Ovary (tissue), 10 donors: ENCODE measurements at regions of chr3 and their contacts with region 1.

Region 1: DNA sequence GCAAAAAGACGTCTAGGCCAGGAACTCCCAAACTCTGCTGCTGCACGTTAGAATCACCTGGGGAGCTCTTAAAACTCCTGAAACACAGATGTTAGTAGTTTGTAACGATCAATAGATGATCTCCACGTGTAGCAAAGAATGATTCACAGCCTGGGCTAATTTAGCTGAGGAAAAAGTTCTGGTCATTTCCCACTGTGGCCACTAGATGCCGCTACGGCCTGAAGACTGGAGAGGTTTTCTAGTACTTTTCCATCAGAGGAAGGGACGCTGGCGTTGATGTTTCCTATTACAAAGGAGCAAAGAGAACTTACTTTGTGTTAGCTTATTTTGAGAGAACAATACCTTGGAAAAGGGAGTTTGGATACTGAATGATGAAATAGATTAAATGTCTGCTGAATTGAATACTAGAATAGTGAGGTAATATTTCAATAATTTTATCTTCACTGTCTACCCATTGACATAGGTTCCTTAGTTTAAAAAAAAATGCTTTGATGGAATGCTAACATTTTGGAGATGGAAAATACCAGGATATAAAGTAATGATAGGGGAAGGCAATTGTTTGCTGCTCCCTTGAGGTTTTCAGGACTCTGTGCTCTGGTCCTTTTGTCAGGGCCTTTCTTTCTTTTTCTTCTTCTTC is 159.1 kb downstream of the P3H2 start:
- DNase-seq: peak; percentile 59 to 83 (median 78)
- H3K4me3 ChIP-seq: no peak overlapping the region
- H3K27ac ChIP-seq: no peak overlapping the region
- H3K4me1 ChIP-seq: no peaks in the 10 kb centered on the region
- H3K27me3 ChIP-seq: no peaks in the 10 kb centered on the region
- CTCF ChIP-seq: peak; percentile 80 to 84 (median 84)
- EP300 ChIP-seq: no peak
- POLR2A ChIP-seq: no peak

Region 2: DNA sequence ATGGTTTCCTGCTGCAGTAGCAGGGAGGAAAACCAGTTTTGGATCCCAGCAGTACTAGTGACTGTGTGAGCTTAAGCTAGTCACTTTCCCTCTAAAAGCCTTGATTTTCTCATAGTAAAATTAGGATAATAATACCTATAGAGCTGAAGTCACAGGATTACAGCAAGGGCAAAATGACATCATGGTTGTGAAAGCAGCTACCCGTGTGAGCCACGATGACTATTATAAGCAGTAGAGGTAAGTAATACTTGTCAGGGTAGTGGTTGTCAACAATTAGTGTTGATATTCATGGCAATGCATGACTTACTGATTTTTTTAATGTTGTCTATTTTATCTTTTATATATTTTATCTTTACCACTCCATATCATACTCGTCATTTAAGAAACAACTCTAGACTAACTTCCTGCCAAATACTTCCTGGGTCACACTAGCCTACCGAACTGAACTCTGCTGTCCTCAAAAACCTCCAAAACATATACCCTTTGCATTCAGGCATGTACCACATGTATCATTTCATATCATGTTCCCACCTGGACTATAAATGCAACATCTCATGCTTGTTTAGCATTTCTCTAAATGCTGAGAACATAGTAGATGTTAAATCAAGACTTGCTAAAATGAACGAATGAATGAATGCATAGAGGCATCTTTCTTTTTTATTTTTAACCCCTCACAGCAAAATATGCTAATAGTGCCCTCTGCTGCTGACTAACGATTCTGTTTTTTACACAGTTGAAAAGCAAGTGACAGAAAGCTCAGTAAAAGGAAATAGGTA is 13.5 kb before region 1 on chr3:
- intact Hi-C with region 1: no loop called
- DNase-seq: no peak
- H3K4me3 ChIP-seq: no peak overlapping the region
- H3K27ac ChIP-seq: no peak overlapping the region
- H3K4me1 ChIP-seq: no peaks in the 10 kb centered on the region
- H3K27me3 ChIP-seq: no peaks in the 10 kb centered on the region
- CTCF ChIP-seq: no peak
- EP300 ChIP-seq: no peak
- POLR2A ChIP-seq: no peak

Region 3: DNA sequence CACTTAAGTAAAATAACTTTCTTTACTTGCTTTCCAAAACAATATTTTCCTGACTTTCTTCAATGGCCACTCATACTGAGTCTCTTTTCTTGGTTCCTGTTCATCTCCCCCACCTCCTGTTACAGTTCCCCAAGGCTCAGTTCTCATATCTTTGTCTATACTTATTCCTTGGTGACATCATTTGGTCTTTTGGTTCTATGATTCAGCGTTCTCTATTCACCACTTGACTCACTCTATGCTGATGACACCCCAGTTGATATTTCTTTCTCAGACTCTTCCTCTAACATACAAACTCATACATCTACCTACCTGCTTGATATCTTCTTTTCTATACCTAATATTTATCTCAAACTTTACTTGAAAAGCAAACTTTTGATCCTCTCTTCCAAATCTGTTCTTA is 244.1 kb after region 1 on chr3:
- intact Hi-C with region 1: loop called in 3 of 4 experiments (anchors 5 kb)
- DNase-seq: no peak
- H3K4me3 ChIP-seq: no peak overlapping the region
- H3K27ac ChIP-seq: no peak overlapping the region
- H3K4me1 ChIP-seq: no peaks in the 10 kb centered on the region
- H3K27me3 ChIP-seq: no peaks in the 10 kb centered on the region
- CTCF ChIP-seq: no peak
- EP300 ChIP-seq: no peak
- POLR2A ChIP-seq: no peak

Region 4: DNA sequence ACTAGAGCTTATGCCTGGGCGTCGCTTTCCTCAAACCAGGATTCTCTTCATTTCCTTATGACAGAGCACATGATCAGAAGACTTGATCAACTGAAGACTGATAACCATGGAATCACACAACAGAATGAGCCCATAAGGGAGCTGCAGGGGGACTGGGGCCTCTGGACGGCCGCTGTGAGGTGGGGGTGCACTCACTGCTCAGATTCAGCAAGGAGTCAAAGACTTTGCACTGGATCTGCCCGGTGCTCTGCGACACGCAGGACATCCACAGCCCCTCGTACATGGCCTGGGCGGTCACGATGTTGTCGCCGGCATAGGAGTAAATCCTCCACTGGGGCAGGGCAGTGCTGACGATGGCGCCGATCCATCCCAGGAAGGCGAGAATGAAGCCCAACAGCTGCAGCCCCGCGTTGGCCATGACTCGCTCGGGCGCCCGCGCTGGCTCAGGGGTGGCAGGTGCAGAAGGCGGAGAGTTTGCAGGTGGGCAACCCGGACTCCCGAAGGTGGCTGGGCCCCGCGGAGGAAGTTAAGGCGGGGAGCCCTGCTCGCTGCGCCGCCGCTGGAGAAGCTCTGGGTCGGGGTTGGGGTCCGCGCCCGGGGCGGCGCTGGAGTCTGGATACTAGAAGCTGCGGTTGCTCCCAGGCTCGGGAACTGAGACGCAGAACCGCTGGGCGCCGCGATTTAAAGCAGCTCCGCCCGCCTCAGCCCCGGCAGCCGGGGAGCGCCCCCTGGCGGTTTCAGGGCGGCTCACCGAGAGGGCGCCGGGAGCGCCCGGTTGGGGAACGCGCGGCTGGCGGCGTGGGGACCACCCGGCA is 360.4 kb after region 1 on chr3 and contains the start of gene CLDN1:
- intact Hi-C with region 1: loop called in 1 of 4 experiments (anchors 5 kb)
- DNase-seq: peak; percentile 78 to 90 (median 86)
- H3K4me3 ChIP-seq: peak within 1 kb of the TSS; percentile 52
- H3K27ac ChIP-seq: peak within 1 kb of the TSS in 1 of 2 donors; percentile 49
- H3K4me1 ChIP-seq: peaks cover 5% of the 10 kb centered on the region
- H3K27me3 ChIP-seq: no peaks in the 10 kb centered on the region
- CTCF ChIP-seq: peak; percentile 87 to 99 (median 91)
- EP300 ChIP-seq: no peak
- POLR2A ChIP-seq: peak; percentile 43
- total RNA-seq, gene CLDN1: 1.8 to 258 (median 13.2) TPM

Region 5: GRCh38 chr3:190424478-190425439 is 463.1 kb after region 1 on chr3:
- intact Hi-C with region 1: loop called in 1 of 4 experiments (anchors 10 kb)
- DNase-seq: peak; percentile 41 to 75 (median 64)
- H3K4me3 ChIP-seq: no peak overlapping the region
- H3K27ac ChIP-seq: no peak overlapping the region
- H3K4me1 ChIP-seq: no peaks in the 10 kb centered on the region
- H3K27me3 ChIP-seq: no peaks in the 10 kb centered on the region
- CTCF ChIP-seq: peak; percentile 23 to 73 (median 44)
- EP300 ChIP-seq: no peak
- POLR2A ChIP-seq: no peak